Lower lobe of right lung (tissue), 2 donors: ENCODE measurements at regions of chr3 and their contacts with region 1.

Region 1: GRCh38 chr3:111967651-111968274 is 11.1 kb upstream of the ABHD10 start:
- DNase-seq: peak; percentile 74
- ATAC-seq: peak; percentile 94 to 95
- H3K4me3 ChIP-seq: no peak overlapping the region
- H3K27ac ChIP-seq: no peak overlapping the region
- H3K4me1 ChIP-seq: peaks cover 18% of the 10 kb centered on the region
- H3K27me3 ChIP-seq: no peaks in the 10 kb centered on the region
- CTCF ChIP-seq: peak; percentile 90

Region 2: GRCh38 chr3:111717601-111718000 is 250.2 kb before region 1 on chr3:
- intact Hi-C with region 1: loop called (anchors 10 kb)
- DNase-seq: peak; percentile 75
- ATAC-seq: peak; percentile 94 to 96
- H3K4me3 ChIP-seq: no peak overlapping the region
- H3K27ac ChIP-seq: no peak overlapping the region
- H3K4me1 ChIP-seq: peaks cover 5% of the 10 kb centered on the region
- H3K27me3 ChIP-seq: no peaks in the 10 kb centered on the region
- CTCF ChIP-seq: peak; percentile 92